Body of pancreas (tissue), 4 donors: ENCODE measurements at regions of chr15 and their contacts with region 1.

Region 1: DNA sequence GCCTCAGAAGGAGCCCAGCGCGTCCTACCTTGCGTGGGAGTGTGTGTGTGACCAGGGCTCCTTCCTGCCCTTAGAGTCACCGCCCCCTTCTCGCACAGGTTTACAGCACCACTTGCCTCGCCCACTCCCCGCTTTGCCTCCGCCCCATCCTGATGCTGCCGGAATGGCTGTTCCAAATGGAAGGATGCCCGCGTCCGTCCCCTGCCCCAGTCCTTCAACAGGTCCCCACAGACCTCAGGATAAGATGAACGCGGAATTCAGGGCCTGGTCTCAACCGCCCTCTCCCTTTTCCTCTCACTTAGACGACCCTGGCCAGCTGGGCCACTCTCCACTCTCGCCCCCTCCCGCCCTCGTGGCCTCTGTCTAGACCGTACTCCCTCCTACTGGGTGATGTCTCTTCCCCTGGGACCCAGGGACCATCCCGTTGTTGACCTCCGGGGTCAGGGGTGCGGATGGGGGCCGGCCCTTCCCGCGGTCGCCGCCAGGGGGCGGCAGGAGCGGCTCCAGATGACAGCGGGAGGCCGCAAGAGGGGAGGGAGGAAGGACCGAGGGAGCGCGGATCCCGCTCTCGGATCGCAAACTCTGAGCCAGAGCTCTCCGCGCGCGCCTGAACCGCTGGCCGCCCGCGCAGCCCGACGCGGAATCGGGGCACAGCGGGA is at the start of gene THSD4:
- DNase-seq: peak; percentile 70 to 79 (median 72)
- ATAC-seq: peak; percentile 85
- H3K4me3 ChIP-seq: peak within 1 kb of the TSS; percentile 19 to 38
- H3K27ac ChIP-seq: peak within 1 kb of the TSS; percentile 25 to 83 (median 66)
- H3K4me1 ChIP-seq: peaks cover 7% of the 10 kb centered on the region
- H3K27me3 ChIP-seq: peaks cover 0 to 6% of the 10 kb centered on the region in 2 donors
- CTCF ChIP-seq: peak; percentile 83 to 97 (median 91)
- POLR2A ChIP-seq: no peak
- total RNA-seq, gene THSD4: 12.9 to 16.1 TPM

Region 2: GRCh38 chr15:71066983-71067382 is 48.0 kb before region 1 on chr15:
- intact Hi-C with region 1: no loop called
- DNase-seq: peak in 2 of 4 donors; percentile 13 to 38
- ATAC-seq: no peak
- H3K4me3 ChIP-seq: no peak overlapping the region
- H3K27ac ChIP-seq: no peak overlapping the region
- H3K4me1 ChIP-seq: no peaks in the 10 kb centered on the region
- H3K27me3 ChIP-seq: no peaks in the 10 kb centered on the region
- CTCF ChIP-seq: no peak
- POLR2A ChIP-seq: no peak

Region 3: GRCh38 chr15:71437404-71438318 is 322.6 kb after region 1 on chr15:
- intact Hi-C with region 1: loop called (anchors 10 kb)
- DNase-seq: no peak
- ATAC-seq: no peak
- H3K4me3 ChIP-seq: no peak overlapping the region
- H3K27ac ChIP-seq: no peak overlapping the region
- H3K4me1 ChIP-seq: no peaks in the 10 kb centered on the region
- H3K27me3 ChIP-seq: no peaks in the 10 kb centered on the region
- CTCF ChIP-seq: no peak
- POLR2A ChIP-seq: no peak